HCT116 (cell line): ENCODE measurements at regions of chr2 and their contacts with region 1.

Region 1: GRCh38 chr2:151711025-151711424 is 23.3 kb downstream of the NEB start:
- DNase-seq: no peak
- ATAC-seq: no peak
- H3K4me3 ChIP-seq: no peak overlapping the region
- H3K27ac ChIP-seq: no peak overlapping the region
- H3K4me1 ChIP-seq: no peaks in the 10 kb centered on the region
- H3K27me3 ChIP-seq: 0 out of 2 replicates have a peak, but pooled peaks cover 7% of the 10 kb centered on the region
- CTCF ChIP-seq: no peak
- POLR2A ChIP-seq: no peak
- RAD21 ChIP-seq: no peak

Region 2: DNA sequence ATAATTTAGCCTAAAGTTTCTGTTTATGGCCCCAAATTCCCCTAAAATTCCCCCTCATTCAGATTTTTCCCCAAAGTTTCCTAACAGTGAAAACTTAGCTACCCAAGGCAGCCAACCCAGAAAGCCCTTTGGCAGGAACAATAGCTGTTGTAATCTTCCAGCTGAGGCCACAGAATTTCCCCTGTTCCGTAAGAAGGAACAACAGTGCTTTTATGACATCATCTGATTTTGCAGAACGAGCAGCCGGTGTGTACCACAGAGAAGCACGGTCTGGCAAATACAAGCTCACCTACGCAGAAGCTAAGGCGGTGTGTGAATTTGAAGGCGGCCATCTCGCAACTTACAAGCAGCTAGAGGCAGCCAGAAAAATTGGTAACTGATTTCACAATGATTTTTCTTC is 347.3 kb before region 1 on chr2:
- CTCF ChIA-PET with region 1: no interaction called
- POLR2A ChIA-PET with region 1: no interaction called
- RAD21 ChIA-PET with region 1: no interaction called
- intact Hi-C with region 1: no loop called
- DNase-seq: no peak
- ATAC-seq: no peak
- H3K4me3 ChIP-seq: no peak overlapping the region
- H3K27ac ChIP-seq: no peak overlapping the region
- H3K4me1 ChIP-seq: no peaks in the 10 kb centered on the region
- H3K27me3 ChIP-seq: no peaks in the 10 kb centered on the region
- CTCF ChIP-seq: no peak
- POLR2A ChIP-seq: no peak
- RAD21 ChIP-seq: no peak

Region 3: GRCh38 chr2:151691631-151692030 is 19.4 kb before region 1 on chr2:
- CTCF ChIA-PET with region 1: no interaction called
- POLR2A ChIA-PET with region 1: no interaction called
- RAD21 ChIA-PET with region 1: no interaction called
- intact Hi-C with region 1: loop called (anchors 1 kb)
- DNase-seq: no peak
- ATAC-seq: no peak
- H3K4me3 ChIP-seq: no peak overlapping the region
- H3K27ac ChIP-seq: no peak overlapping the region
- H3K4me1 ChIP-seq: no peaks in the 10 kb centered on the region
- H3K27me3 ChIP-seq: no peaks in the 10 kb centered on the region
- CTCF ChIP-seq: no peak
- POLR2A ChIP-seq: no peak
- RAD21 ChIP-seq: peak; percentile 20; the same call in 1 of the 2 replicates